ENCODE measurements at regions of chr7 and their contacts with region 1.

Region 1: DNA sequence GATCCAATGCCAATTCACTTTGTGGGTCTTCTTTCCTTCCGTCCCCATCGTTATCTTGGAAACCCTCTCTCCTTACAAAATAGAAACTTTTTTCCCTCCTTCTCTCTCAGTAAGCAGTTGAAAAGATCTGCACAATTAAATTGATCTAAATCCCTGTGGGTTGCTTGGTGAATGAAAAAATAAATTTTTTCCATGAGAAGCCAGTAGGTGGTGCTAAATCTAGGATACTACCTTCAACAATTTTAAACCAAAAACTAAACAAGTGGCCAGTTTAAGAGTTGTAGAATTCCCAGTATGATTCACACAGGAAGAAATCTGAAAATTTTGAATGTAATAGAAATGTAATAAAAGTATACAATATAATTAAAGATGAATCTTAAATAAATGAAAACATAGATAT is 990.3 kb upstream of the ZNF722 start:
- DNase-seq: no peak
- H3K4me3 ChIP-seq: no peak overlapping the region
- H3K4me3 Mint-ChIP-seq: no peak overlapping the region
- H3K27ac ChIP-seq: no peak overlapping the region
- H3K27ac Mint-ChIP-seq: no peak overlapping the region
- H3K4me1 ChIP-seq: no peaks in the 10 kb centered on the region
- H3K4me1 Mint-ChIP-seq: no peaks in the 10 kb centered on the region
- H3K27me3 ChIP-seq: no peaks in the 10 kb centered on the region
- H3K27me3 Mint-ChIP-seq: no peaks in the 10 kb centered on the region

Region 2: DNA sequence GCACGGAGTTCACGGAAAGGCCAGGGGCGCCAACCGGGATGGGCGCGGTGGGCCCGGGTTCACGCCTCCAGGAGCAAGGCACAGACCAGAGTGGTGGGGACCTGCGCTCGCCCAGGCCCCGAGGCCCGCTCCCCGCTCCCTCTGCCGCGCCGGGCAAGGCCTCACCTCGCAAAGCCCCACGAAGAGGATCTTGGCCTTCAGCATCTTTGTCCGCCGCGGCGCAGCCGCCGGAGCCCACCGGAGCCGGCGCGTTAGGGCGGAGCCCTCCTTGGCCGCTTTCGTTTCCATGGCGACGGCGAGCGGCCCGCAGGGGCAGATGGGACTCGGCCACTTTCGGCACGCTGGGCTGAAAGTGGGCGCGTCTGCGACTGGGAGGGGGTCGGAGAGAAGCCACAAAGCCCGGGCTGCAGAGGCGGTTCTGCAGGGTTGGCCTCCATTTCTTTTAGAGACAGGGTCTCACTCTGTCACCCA is 45.9 kb after region 1 on chr7:
- CTCF ChIA-PET with region 1: no interaction called
- POLR2A ChIA-PET with region 1: no interaction called
- intact Hi-C with region 1: loop called (anchors 10 kb)
- DNase-seq: no peak
- H3K4me3 ChIP-seq: no peak overlapping the region
- H3K4me3 Mint-ChIP-seq: no peak overlapping the region
- H3K27ac ChIP-seq: no peak overlapping the region
- H3K27ac Mint-ChIP-seq: no peak overlapping the region
- H3K4me1 ChIP-seq: no peaks in the 10 kb centered on the region
- H3K4me1 Mint-ChIP-seq: no peaks in the 10 kb centered on the region
- H3K27me3 ChIP-seq: no peaks in the 10 kb centered on the region
- H3K27me3 Mint-ChIP-seq: no peaks in the 10 kb centered on the region

Measured in CD4-positive, alpha-beta memory T cell (primary cell).